CD8-positive, alpha-beta T cell (primary cell): ENCODE measurements at regions of chr11 and their contacts with region 1.

Region 1: GRCh38 chr11:73141848-73142286 is 251 bp downstream of the FCHSD2 start:
- DNase-seq: peak in 7 of 9 experiments; percentile 23 to 81 (median 66)
- ATAC-seq: peak; percentile 27
- H3K4me3 ChIP-seq: peak overlapping the region; percentile 97 to 99
- H3K4me3 Mint-ChIP-seq: peak overlapping the region; percentile 98
- H3K27ac ChIP-seq: peak overlapping the region; percentile 83 to 87
- H3K27ac Mint-ChIP-seq: peak overlapping the region; percentile 96
- H3K4me1 ChIP-seq: peaks cover 33% of the 10 kb centered on the region
- H3K4me1 Mint-ChIP-seq: peaks cover 52% of the 10 kb centered on the region
- H3K27me3 ChIP-seq: no peaks in the 10 kb centered on the region
- H3K27me3 Mint-ChIP-seq: no peaks in the 10 kb centered on the region
- CTCF ChIP-seq: no peak

Region 2: GRCh38 chr11:72736452-72737069 is 405.3 kb before region 1 on chr11:
- CTCF ChIA-PET with region 1: no interaction called
- POLR2A ChIA-PET with region 1: interaction called, 6 read pairs
- intact Hi-C with region 1: loop called in 1 of 2 experiments (anchors 5 kb)
- DNase-seq: peak; percentile 50 to 95 (median 75)
- ATAC-seq: peak; percentile 89
- H3K4me3 ChIP-seq: no peak overlapping the region
- H3K4me3 Mint-ChIP-seq: peak overlapping the region; percentile 47
- H3K27ac ChIP-seq: peak overlapping the region; percentile 60 to 96
- H3K27ac Mint-ChIP-seq: peak overlapping the region; percentile 99
- H3K4me1 ChIP-seq: peaks cover 53% of the 10 kb centered on the region
- H3K4me1 Mint-ChIP-seq: peaks cover 56% of the 10 kb centered on the region
- H3K27me3 ChIP-seq: no peaks in the 10 kb centered on the region
- H3K27me3 Mint-ChIP-seq: no peaks in the 10 kb centered on the region
- CTCF ChIP-seq: no peak

Region 3: DNA sequence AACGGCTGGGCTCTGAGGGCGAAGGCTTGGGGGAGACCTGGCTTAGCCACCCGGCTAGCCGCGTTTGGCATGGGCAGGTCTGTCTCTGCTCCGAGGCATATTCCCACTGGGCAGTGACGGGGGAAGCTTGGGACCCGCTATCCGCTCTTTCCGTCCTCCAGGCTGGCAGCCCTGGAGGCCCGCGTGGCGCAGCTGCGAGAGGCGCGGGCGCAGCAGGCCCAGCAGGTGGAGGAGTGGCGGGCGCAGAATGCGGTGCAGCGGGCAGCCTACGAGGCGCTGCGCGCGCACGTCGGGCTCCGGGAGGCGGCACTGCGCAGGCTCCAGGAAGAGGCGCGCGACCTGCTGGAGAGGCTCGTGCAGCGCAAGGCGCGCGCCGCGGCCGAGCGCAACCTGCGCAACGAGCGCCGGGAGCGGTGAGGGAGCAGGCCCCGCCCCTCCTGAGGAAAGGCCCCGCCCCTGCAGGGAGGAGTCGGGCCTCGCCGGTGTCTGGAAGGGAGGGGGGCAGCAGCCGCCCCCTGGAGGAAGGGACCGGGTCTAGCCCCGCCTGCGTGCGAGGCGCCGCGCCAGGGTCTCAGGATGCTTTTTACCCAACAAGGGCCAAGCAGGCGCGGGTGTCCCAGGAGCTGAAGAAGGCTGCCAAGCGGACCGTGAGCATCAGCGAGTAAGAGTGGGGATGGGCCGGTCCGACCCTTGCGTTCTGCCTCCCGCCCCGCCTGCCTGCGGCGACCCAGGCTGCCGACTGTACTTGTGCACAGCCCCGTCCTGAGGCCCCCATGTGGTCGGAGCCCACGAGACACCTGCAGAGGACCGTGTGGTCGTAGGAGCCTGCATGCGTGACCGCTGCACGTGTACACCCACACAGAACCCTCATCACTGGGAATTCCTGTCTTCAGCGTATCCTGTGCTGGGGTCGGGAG is 319.7 kb before region 1 on chr11:
- CTCF ChIA-PET with region 1: no interaction called
- POLR2A ChIA-PET with region 1: no interaction called
- intact Hi-C with region 1: loop called in 1 of 2 experiments (anchors 1 kb)
- DNase-seq: peak; percentile 59 to 96 (median 84)
- ATAC-seq: peak; percentile 94
- H3K4me3 ChIP-seq: peak overlapping the region in 1 of 2 experiments; percentile 45
- H3K4me3 Mint-ChIP-seq: peak overlapping the region; percentile 29
- H3K27ac ChIP-seq: peak overlapping the region in 1 of 2 experiments; percentile 61
- H3K27ac Mint-ChIP-seq: peak overlapping the region; percentile 80
- H3K4me1 ChIP-seq: peaks cover 6% of the 10 kb centered on the region
- H3K4me1 Mint-ChIP-seq: peaks cover 10% of the 10 kb centered on the region
- H3K27me3 ChIP-seq: no peaks in the 10 kb centered on the region
- H3K27me3 Mint-ChIP-seq: no peaks in the 10 kb centered on the region
- CTCF ChIP-seq: no peak

Region 4: DNA sequence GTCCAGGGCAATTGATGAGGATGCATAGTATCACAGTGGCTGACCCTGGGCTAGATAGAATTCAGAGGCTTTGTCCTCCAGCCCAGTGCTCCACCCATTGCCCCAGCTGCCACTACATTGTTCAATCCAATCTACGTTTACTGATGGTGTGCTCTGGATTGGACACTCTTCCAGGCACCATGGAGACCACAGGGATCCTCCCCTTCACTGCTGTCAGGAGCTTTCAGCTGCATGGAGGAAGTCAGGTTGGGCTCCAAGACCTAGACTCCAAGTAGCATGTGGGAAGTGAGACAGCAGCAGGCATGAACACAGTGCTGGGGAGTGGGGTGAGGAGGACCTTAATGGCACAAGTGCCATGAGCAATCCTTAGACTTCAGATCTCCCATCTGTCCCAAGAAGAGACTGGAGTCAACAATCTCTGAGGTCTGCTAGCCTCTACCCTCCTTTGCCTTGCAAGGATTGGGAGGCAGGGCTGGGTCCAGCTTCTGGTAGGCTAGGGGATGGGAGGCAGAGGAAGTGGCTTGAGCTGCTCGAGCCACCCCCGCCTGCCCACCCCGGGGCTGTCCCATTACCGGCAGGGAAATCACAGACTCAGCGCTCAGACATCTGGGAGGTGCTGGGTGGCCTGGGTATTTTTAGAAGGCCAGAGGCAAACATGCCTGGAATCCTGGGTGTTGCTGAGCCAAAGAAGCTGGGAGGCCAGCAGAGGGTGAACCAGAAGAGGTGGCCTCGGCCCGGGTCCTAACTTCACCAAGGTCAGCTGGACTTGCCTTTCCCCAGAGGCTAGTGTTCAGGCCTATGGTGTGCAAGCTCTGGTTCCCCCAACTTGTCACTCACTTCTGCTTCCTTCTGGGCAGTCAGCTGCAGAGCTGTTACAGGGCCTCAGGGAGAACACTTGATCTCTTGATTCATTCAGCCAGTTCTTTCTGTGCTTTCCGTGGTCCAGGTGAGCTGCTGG is 15.5 kb after region 1 on chr11:
- CTCF ChIA-PET with region 1: interaction called, 9 read pairs
- POLR2A ChIA-PET with region 1: interaction called, 17 read pairs
- intact Hi-C with region 1: loop called in 1 of 2 experiments (anchors 1 kb)
- DNase-seq: no peak
- ATAC-seq: no peak
- H3K4me3 ChIP-seq: no peak overlapping the region
- H3K4me3 Mint-ChIP-seq: no peak overlapping the region
- H3K27ac ChIP-seq: no peak overlapping the region
- H3K27ac Mint-ChIP-seq: no peak overlapping the region
- H3K4me1 ChIP-seq: peaks cover 50% of the 10 kb centered on the region
- H3K4me1 Mint-ChIP-seq: peaks cover 49% of the 10 kb centered on the region
- H3K27me3 ChIP-seq: no peaks in the 10 kb centered on the region
- H3K27me3 Mint-ChIP-seq: no peaks in the 10 kb centered on the region
- CTCF ChIP-seq: no peak

Region 5: GRCh38 chr11:73314117-73314961 is 172.5 kb after region 1 on chr11:
- CTCF ChIA-PET with region 1: no interaction called
- POLR2A ChIA-PET with region 1: no interaction called
- intact Hi-C with region 1: no loop called
- DNase-seq: no peak
- ATAC-seq: no peak
- H3K4me3 ChIP-seq: no peak overlapping the region
- H3K4me3 Mint-ChIP-seq: no peak overlapping the region
- H3K27ac ChIP-seq: no peak overlapping the region
- H3K27ac Mint-ChIP-seq: no peak overlapping the region
- H3K4me1 ChIP-seq: no peaks in the 10 kb centered on the region
- H3K4me1 Mint-ChIP-seq: peaks cover 2% of the 10 kb centered on the region
- H3K27me3 ChIP-seq: no peaks in the 10 kb centered on the region
- H3K27me3 Mint-ChIP-seq: peaks cover 2% of the 10 kb centered on the region
- CTCF ChIP-seq: no peak

Region 6: DNA sequence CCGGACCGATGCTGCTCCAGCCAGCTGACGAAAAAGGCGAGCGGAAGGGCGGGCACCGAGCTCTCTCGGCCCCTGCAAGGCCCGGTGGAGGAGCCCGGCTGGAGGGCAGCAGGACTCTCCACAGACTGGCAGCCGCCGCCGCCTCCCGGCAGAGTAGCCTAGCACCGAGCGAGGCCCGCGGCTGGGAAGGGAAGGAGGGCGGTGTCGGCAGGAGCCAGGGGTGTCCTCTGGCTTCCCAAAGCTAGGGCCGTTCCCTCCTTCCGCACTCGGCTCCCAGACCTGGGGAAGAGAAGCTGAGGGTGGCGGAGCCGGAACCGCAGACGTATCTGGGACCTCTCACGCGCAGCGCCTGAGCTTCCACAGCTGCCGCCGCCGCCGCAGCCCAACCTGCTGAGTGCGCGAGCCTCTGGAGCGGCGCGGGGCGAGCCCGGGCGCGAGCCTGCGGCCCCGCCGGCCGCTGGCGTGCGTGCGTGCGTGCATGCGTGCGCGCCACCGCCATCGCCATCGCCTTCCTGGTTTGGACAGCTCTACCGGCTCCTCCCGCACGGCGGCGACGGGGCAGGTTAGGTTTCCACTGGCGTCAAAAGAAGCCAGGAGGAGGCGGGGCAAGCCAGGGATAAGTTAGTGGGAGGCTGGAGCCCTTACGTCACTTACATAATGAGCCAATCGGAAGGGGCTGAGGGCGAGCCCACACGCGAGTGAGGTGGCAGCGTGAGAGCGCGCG is 619.0 kb after region 1 on chr11 and contains the start of gene RAB6A:
- CTCF ChIA-PET with region 1: no interaction called
- POLR2A ChIA-PET with region 1: interaction called, 4 read pairs
- intact Hi-C with region 1: loop called (anchors 2 to 10 kb)
- DNase-seq: peak; percentile 99 to 100 (median 99)
- ATAC-seq: peak; percentile 93
- H3K4me3 ChIP-seq: peak within 1 kb of the TSS; percentile 69 to 93
- H3K4me3 Mint-ChIP-seq: peak within 1 kb of the TSS; percentile 85
- H3K27ac ChIP-seq: peak within 1 kb of the TSS; percentile 71 to 90
- H3K27ac Mint-ChIP-seq: peak within 1 kb of the TSS; percentile 95
- H3K4me1 ChIP-seq: peaks cover 17% of the 10 kb centered on the region
- H3K4me1 Mint-ChIP-seq: peaks cover 29% of the 10 kb centered on the region
- H3K27me3 ChIP-seq: no peaks in the 10 kb centered on the region
- H3K27me3 Mint-ChIP-seq: no peaks in the 10 kb centered on the region
- CTCF ChIP-seq: peak; percentile 24
- total RNA-seq, gene RAB6A: 43.7 to 53.3 TPM